ENCODE measurements at regions of chr14 and their contacts with region 1.

Region 1: GRCh38 chr14:55373784-55374705 is 37.6 kb downstream of the ATG14 start:
- DNase-seq: peak; percentile 81
- H3K4me3 Mint-ChIP-seq: peak overlapping the region; percentile 72
- H3K27ac Mint-ChIP-seq: peak overlapping the region; percentile 95
- H3K4me1 Mint-ChIP-seq: peaks cover 31% of the 10 kb centered on the region
- H3K27me3 Mint-ChIP-seq: no peaks in the 10 kb centered on the region

Region 2: GRCh38 chr14:55270832-55271565 is 103.0 kb before region 1 on chr14 and contains the start of gene FBXO34:
- intact Hi-C with region 1: loop called (anchors 1 kb)
- DNase-seq: peak; percentile 100
- H3K4me3 Mint-ChIP-seq: peak within 1 kb of the TSS; percentile 91
- H3K27ac Mint-ChIP-seq: peak within 1 kb of the TSS; percentile 96
- H3K4me1 Mint-ChIP-seq: peaks cover 32% of the 10 kb centered on the region
- H3K27me3 Mint-ChIP-seq: no peaks in the 10 kb centered on the region
- total RNA-seq, gene FBXO34: 25.3 and 26.2 TPM in 2 replicates

Region 3: GRCh38 chr14:55333711-55334485 is 40.1 kb before region 1 on chr14:
- intact Hi-C with region 1: loop called (anchors 1 kb)
- DNase-seq: no peak
- H3K4me3 Mint-ChIP-seq: peak overlapping the region; percentile 77
- H3K27ac Mint-ChIP-seq: peak overlapping the region; percentile 87
- H3K4me1 Mint-ChIP-seq: peaks cover 68% of the 10 kb centered on the region
- H3K27me3 Mint-ChIP-seq: no peaks in the 10 kb centered on the region

Region 4: DNA sequence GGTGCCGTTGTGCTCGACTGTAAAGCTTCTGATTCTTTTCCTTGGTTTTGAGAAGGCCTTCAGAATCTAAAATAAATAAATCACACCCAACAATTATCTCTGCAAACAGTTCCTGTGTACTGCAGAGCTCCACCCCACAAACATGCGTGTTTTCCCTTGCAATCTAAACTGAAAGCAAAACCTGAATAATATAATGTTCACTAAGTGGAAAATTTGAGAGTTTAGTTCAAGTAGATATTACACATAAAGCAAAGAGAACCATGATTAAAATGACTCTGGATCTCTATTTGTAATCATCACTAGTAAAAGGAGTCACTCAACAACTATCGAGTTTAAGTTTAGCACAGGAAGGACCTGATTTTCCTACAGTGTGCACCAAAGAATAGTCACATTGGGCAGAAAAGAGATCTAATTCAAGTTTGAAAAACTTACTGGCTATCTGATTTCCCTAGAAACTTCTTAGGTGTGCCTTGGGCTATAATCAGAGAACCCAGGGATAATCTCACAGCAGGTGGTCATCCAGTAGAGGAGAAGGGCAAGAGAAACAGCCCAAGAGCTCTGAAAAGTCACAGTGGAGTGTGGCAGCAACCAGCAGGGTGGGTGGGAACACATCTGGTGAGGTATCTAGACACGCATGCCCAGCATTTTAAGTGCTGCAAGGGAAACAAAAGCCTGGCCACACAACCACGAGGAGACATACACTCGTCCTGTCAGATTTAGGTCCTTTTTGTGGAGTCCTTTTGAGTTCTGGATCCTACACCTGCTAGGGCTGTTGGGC is 12.2 kb after region 1 on chr14:
- intact Hi-C with region 1: loop called (anchors 1 kb)
- DNase-seq: peak; percentile 73
- H3K4me3 Mint-ChIP-seq: peak overlapping the region; percentile 65
- H3K27ac Mint-ChIP-seq: peak overlapping the region; percentile 97
- H3K4me1 Mint-ChIP-seq: peaks cover 52% of the 10 kb centered on the region
- H3K27me3 Mint-ChIP-seq: no peaks in the 10 kb centered on the region

Region 5: GRCh38 chr14:56131865-56132833 is 758.1 kb after region 1 on chr14:
- intact Hi-C with region 1: loop called (anchors 1 kb)
- DNase-seq: no peak
- H3K4me3 Mint-ChIP-seq: no peak overlapping the region
- H3K27ac Mint-ChIP-seq: peak overlapping the region; percentile 18
- H3K4me1 Mint-ChIP-seq: peaks cover 20% of the 10 kb centered on the region
- H3K27me3 Mint-ChIP-seq: peaks cover 12% of the 10 kb centered on the region